Right ventricle myocardium superior (tissue), 1 donor: ENCODE measurements at regions of chr5 and their contacts with region 1.

Region 1: DNA sequence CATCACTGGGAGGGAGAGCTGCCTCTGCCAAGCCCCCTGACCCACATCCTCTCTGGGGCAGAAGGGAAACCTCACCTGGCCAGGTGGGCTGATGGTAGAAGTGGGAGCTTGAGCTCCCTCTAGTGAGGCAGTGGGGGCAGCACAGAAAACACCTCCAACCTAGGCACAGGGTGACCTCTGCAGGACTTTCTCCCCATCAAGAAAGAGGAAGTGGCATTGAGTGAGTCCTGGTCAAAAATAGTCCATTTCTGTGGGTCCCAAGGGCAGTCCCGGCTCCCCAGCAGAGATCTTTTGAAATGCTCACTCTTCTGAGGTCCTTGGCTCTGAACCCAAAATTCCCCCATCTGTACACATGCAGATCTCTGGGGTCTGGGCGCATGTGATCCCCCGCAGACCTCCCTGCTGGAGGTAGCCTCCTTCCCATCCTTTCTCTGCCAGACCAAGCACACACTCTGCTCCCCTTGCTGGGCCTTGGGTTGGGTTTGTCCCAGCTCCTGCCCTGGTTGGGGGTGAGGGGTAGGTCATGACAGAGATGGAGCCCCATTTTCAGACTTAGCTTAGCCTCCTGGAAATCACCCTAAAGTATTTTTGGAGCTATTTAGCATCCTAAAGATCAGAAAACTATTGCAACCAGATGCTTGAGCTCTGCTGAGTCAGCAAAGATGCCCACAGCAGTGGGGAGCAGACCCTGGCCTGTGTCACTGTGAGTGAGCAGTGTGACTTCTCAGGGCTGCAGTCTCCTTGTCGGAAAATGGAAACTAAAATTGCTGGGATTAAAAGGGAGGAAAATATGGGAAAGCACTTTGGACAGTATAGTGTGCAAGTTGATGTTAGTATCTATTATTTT is 41.6 kb upstream of the LCP2 start:
- DNase-seq: no peak
- ATAC-seq: peak; percentile 72

Region 2: DNA sequence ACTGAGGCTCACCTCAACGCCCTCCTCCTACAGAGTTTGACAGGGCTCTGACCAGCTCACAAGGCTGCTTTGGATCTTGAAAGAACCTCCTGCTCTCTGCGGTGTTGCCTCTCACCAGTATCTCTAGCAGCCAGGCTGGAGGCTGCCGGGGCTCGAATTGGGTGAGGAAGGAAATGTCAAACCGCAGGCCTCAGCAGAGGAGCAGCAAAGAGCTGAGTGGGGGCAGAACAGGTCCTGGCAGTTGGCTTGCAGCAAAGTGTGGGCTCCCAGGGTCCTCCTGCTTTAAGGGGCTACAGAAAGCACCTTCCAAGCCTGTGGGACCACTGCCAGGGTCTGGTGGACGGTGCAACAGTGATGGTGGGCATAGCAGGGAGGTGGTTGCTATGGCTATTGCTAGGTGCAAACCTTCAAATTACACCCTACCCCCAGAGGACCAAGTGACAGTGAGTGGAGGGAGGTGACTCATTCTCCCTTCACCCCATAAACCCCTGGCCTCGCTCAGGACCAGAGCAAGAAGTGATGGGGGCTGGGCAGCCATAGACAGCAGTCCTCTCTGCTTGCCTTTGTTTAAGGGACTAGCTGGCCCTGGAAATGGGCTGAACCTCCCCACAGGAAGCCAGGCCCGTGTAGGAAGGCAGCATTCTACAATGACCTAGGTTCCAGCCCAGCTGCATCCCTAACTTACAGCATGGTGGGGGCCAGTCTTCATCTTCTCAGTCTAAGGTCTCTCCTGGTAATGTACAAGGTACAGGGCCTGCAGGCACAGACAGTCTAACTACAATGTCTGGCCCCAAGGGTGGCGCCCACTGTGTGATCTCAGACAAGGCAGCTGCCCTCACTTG is 60.3 kb before region 1 on chr5:
- intact Hi-C with region 1: loop called (anchors 5 kb)
- DNase-seq: peak; percentile 78
- ATAC-seq: peak; percentile 52